PC-3 (cell line): ENCODE measurements at regions of chr4 and their contacts with region 1.

Region 1: DNA sequence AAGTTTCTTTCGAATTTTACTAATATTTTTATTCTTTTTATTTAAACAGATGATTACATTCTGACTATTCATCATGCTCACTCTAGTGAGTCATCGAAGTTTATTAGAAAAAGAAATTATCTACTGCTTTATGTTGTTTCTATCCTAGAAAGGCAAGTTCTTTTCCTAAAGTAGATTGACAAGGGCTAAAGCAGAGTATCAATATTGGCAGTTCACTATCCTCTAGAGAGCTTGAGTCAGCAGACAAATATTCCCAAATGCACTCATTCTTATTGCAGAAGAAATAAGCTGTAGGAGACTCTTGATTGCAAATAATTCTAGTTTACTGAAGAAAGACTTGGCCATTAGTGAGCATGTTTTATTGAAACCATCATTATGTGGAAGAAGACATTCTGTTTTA is 911.8 kb downstream of the CENPC start:
- DNase-seq: peak; percentile 74
- ATAC-seq: peak; percentile 67
- H3K4me3 ChIP-seq: no peak overlapping the region
- H3K27ac ChIP-seq: no peak overlapping the region
- H3K4me1 ChIP-seq: peaks cover 18% of the 10 kb centered on the region
- H3K27me3 ChIP-seq: no peaks in the 10 kb centered on the region
- CTCF ChIP-seq: no peak

Region 2: GRCh38 chr4:66300336-66300934 is 333.0 kb before region 1 on chr4:
- CTCF ChIA-PET with region 1: no interaction called
- POLR2A ChIA-PET with region 1: no interaction called
- intact Hi-C with region 1: loop called (anchors 5 kb)
- DNase-seq: peak; percentile 89
- ATAC-seq: peak; percentile 81
- H3K4me3 ChIP-seq: no peak overlapping the region
- H3K27ac ChIP-seq: peak overlapping the region; percentile 79
- H3K4me1 ChIP-seq: peaks cover 41% of the 10 kb centered on the region
- H3K27me3 ChIP-seq: no peaks in the 10 kb centered on the region
- CTCF ChIP-seq: no peak